ENCODE measurements at regions of chr6 and their contacts with region 1.

Region 1: GRCh38 chr6:10837995-10838793 is at the start of gene MAK:
- DNase-seq: peak; percentile 98
- H3K4me3 Mint-ChIP-seq: peak within 1 kb of the TSS; percentile 89
- H3K27ac Mint-ChIP-seq: peak within 1 kb of the TSS; percentile 100
- H3K4me1 Mint-ChIP-seq: peaks cover 18% of the 10 kb centered on the region
- H3K27me3 Mint-ChIP-seq: peaks cover 42% of the 10 kb centered on the region
- total RNA-seq, gene MAK: 0.47 and 0.58 TPM in 2 replicates

Region 2: DNA sequence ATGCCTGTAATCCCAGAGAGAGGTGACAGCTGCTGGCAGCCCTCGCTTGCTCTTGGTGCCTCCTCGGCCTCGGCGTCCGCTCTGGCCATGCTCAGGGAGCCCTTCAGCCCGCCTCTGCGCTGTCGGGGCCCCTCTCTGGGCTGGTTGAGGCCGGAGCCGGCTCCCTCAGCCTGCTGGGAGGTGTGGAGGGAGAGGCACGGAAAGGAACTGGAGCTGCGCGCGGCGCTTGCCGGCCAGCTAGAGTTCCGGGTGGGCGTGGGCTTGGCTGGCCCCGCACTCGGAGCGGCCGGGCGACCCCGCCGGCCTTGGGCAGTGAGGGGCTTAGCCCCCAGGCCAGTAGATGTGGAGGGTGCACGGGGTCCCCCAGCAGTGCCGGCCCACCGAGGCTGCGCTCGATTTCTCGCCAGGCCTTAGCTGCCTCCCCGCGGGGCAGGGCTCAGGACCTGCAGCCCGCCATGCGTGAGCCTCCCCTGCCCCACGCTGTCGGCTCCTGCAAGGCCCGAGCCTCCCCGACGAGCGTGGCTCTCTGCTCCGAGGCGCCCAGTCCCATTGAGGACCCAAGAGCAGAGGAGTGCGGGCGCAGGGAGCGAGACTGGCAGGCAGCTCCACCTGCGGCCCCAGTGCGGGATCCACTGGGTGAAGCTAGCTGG is 178.4 kb before region 1 on chr6:
- intact Hi-C with region 1: loop called (anchors 5 kb)
- DNase-seq: no peak
- H3K4me3 Mint-ChIP-seq: no peak overlapping the region
- H3K27ac Mint-ChIP-seq: no peak overlapping the region
- H3K4me1 Mint-ChIP-seq: peaks cover 16% of the 10 kb centered on the region
- H3K27me3 Mint-ChIP-seq: peaks cover 19% of the 10 kb centered on the region

Region 3: GRCh38 chr6:10722820-10723566 is 115.2 kb before region 1 on chr6 and contains the start of gene TMEM14C:
- intact Hi-C with region 1: loop called (anchors 1 kb)
- DNase-seq: peak; percentile 97
- H3K4me3 Mint-ChIP-seq: peak within 1 kb of the TSS; percentile 89
- H3K27ac Mint-ChIP-seq: peak within 1 kb of the TSS; percentile 93
- H3K4me1 Mint-ChIP-seq: peaks cover 27% of the 10 kb centered on the region
- H3K27me3 Mint-ChIP-seq: no peaks in the 10 kb centered on the region
- total RNA-seq, gene TMEM14C: 65.0 and 67.7 TPM in 2 replicates

Region 4: DNA sequence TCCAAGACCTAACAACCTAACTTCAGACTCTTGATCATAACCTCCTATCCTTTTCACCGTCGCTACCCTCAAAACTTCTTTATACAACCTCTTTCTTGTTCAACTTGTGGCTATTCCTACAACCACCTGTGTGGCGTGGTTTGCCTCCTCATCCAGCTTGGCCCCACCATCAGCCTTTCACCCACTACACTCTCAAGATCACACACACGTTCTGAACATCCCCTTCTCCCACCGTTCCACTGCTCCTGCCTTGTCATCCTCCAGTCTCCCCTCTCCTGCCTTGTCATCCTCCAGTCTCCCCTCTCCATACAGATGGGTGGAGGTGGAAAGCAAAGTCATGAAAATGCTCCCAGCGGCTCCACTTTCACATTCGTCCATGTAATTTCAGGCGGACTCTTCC is 13.9 kb before region 1 on chr6:
- intact Hi-C with region 1: no loop called
- DNase-seq: no peak
- H3K4me3 Mint-ChIP-seq: no peak overlapping the region
- H3K27ac Mint-ChIP-seq: no peak overlapping the region
- H3K4me1 Mint-ChIP-seq: no peaks in the 10 kb centered on the region
- H3K27me3 Mint-ChIP-seq: no peaks in the 10 kb centered on the region

Region 5: DNA sequence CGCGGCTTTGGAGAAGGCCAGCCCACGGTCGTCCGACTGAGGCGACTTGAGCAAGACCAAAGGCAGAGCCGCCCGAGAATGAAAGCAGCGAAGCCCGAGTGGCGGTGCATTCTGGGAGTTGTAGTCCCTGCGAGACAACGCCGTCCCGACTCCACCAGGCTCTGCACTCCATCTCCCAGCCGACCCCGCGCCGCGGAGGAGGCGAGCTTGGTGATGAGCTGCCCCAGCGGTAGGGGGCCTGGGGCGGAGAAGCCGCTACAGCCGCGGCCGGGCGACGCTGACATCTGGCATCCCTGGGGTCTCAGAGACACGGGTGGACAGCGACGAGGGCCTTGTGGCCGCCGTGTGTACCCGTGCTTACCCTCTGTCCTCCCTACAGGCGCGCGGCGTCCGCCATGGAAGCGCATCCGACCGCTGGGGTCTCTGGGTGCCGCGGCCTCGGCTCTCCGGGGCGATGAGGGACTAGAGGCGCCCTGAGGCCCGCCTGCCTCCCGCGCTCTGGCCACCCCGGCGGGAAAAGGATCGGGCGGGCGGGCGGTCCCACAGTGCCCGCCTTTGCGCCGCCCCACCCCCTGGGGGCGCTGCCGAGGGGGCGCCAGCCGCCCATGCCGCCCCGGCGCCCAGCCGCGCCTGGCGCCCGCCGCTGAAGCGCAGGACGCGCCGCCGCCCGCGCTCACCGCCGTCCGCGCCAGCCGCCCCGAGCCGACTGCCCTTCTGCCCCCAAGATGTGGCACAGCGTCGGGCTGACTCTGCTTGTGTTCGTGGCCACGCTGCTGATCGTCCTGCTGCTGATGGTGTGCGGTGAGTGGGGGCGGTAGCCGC is 255.6 kb after region 1 on chr6 and contains the start of gene SMIM13:
- intact Hi-C with region 1: loop called (anchors 1 kb)
- DNase-seq: peak; percentile 99
- H3K4me3 Mint-ChIP-seq: peak within 1 kb of the TSS; percentile 92
- H3K27ac Mint-ChIP-seq: peak within 1 kb of the TSS; percentile 95
- H3K4me1 Mint-ChIP-seq: peaks cover 26% of the 10 kb centered on the region
- H3K27me3 Mint-ChIP-seq: peaks cover 2% of the 10 kb centered on the region
- total RNA-seq, gene SMIM13: 15.2 and 15.6 TPM in 2 replicates

Measured in activated CD4-positive, alpha-beta T cell treated with anti-CD3 and anti-CD28 coated beads, Interleukin-2, amount 10 ng/mL, durations not matched to agents 24 days and 14 days (primary cell).